Kidney (tissue), 22 donors: ENCODE measurements at regions of chr3 and their contacts with region 1.

Region 1: GRCh38 chr3:52001443-52001974 is 5.8 kb upstream of the RPL29 start:
- DNase-seq: peak; percentile 90 to 95 (median 93)
- H3K4me3 ChIP-seq: no peak overlapping the region
- H3K27ac ChIP-seq: no peak overlapping the region
- H3K4me1 ChIP-seq: peaks cover 0 to 15% (median under 1%) of the 10 kb centered on the region in 3 donors
- H3K27me3 ChIP-seq: no peaks in the 10 kb centered on the region
- CTCF ChIP-seq: peak; percentile 93

Region 2: DNA sequence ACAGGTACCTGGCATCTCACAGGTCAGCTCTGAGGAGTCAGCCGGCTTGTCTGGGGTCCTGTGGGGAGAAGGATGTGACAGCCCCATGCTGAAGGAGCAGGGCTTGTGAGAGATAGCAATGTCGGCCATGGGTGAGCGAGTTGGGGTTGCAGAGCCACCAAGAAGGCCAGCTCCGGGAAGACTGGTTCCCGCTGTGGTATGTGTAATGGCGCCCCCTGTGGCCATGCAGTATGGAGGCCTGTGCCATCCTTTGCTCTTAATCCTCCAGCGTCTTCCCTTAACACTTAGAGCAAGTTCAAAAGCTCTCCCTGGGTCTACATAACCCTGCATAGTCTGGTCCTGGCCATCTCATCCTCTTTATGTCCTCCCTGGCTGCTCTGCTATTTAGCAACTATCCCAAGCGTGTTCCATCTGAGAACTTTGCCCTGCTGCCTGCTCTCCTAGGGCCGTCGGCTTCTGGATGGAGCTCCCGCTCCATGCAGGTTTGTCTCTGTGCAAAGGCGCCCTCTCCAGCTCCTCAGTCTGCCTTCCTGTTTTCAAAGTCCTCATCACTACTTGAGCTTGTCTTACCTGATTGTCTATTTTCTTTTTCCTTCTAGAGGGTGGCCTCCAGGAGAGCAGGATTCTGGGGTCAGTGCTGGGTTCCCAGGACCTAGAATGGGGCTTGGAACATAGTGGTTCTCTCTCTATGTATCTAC is 181.7 kb before region 1 on chr3:
- intact Hi-C with region 1: no loop called
- DNase-seq: peak in 1 of 5 donors; percentile 2
- H3K4me3 ChIP-seq: no peak overlapping the region
- H3K27ac ChIP-seq: no peak overlapping the region
- H3K4me1 ChIP-seq: no peaks in the 10 kb centered on the region
- H3K27me3 ChIP-seq: no peaks in the 10 kb centered on the region
- CTCF ChIP-seq: no peak

Region 3: DNA sequence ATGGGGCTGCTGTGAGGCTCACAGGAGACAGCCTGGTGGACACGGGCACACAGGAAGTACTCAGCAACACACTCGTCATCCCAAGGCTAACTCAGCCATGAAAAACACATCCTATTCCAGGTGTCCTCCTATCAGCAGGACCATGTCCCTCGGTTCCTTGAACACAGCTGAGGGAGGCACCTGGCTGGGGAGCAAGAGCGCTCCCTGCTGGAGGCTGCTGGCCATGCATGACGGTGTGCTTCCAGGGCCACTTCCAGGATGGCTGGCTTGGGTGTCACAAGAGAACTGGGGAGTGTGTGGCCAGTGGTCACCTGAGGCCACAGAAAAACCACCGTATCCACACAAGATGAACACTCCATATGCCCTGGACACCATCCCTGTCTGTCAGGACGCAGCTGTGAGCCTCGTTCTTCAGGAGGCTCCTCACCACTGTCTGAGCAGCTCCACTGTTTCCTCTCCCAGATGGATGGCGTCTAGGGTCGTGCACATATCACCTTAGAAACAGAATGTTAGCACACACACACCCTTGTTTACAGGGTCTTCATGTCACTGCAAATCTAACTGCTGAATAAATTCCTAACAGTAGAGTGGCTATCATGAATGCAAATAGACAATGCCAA is 121.7 kb after region 1 on chr3:
- intact Hi-C with region 1: loop called (anchors 5 kb)
- DNase-seq: peak; percentile 80 to 89 (median 86)
- H3K4me3 ChIP-seq: no peak overlapping the region
- H3K27ac ChIP-seq: no peak overlapping the region
- H3K4me1 ChIP-seq: peaks cover 2 to 6% (median 2%) of the 10 kb centered on the region in 3 donors
- H3K27me3 ChIP-seq: no peaks in the 10 kb centered on the region
- CTCF ChIP-seq: peak; percentile 94

Region 4: GRCh38 chr3:52144034-52144795 is 142.7 kb after region 1 on chr3:
- intact Hi-C with region 1: loop called (anchors 5 kb)
- DNase-seq: peak; percentile 80 to 92 (median 88)
- H3K4me3 ChIP-seq: no peak overlapping the region
- H3K27ac ChIP-seq: no peak overlapping the region
- H3K4me1 ChIP-seq: no peaks in the 10 kb centered on the region
- H3K27me3 ChIP-seq: no peaks in the 10 kb centered on the region
- CTCF ChIP-seq: peak; percentile 98